Activated T-helper 1 cell treated with anti-CD3 and anti-CD28 coated beads, Interleukin-12 subunit alpha, Interleukin-12 subunit beta, Interleukin-2, Interleukin-4 antibody, amounts not matched to agents 30 ng/mL and 10 ng/mL and 1 ng/mL, durations not matched to agents 14 hours and 24 hours and 36 hours (primary cell): ENCODE measurements at regions of chr3 and their contacts with region 1.

Region 1: GRCh38 chr3:134473868-134474546 is 11.8 kb downstream of the ANAPC13 start:
- DNase-seq: peak; percentile 63
- H3K4me3 Mint-ChIP-seq: no peak overlapping the region
- H3K27ac Mint-ChIP-seq: no peak overlapping the region
- H3K4me1 Mint-ChIP-seq: no peaks in the 10 kb centered on the region
- H3K27me3 Mint-ChIP-seq: peaks cover 1% of the 10 kb centered on the region

Region 2: DNA sequence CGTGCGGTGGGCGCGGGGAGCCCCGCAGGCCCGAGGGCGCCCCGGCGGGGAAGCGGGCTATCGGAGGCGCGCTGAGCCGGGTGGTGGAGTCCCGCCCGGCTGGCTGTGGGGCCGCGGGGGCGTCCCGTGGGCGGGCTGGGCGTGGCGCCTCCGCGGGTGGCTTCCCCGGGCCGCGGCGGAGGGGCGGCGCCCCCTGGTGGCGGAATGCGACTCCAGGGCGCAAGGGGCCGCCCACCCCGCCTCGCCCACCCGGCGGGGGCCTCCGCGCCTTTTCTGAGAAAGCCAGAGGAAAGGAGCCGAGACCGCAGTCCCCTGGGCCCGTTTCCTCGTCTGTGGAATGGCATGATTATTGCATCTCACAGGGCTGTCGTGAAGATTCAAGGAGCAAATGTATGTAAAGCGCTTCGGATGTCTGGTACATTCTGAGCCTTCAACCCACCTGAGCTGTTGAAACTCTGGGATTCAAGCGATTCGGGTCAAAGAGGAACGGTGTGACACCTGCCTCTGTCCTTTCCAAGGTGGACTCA is 546.4 kb before region 1 on chr3:
- intact Hi-C with region 1: loop called (anchors 10 kb)
- DNase-seq: peak; percentile 61
- H3K4me3 Mint-ChIP-seq: peak overlapping the region; percentile 46
- H3K27ac Mint-ChIP-seq: no peak overlapping the region
- H3K4me1 Mint-ChIP-seq: peaks cover 5% of the 10 kb centered on the region
- H3K27me3 Mint-ChIP-seq: peaks cover 30% of the 10 kb centered on the region

Region 3: GRCh38 chr3:134134240-134134639 is 339.8 kb before region 1 on chr3:
- intact Hi-C with region 1: no loop called
- DNase-seq: no peak
- H3K4me3 Mint-ChIP-seq: no peak overlapping the region
- H3K27ac Mint-ChIP-seq: no peak overlapping the region
- H3K4me1 Mint-ChIP-seq: no peaks in the 10 kb centered on the region
- H3K27me3 Mint-ChIP-seq: peaks cover 2% of the 10 kb centered on the region

Region 4: GRCh38 chr3:134197681-134198261 is 276.2 kb before region 1 on chr3:
- intact Hi-C with region 1: loop called (anchors 1 kb)
- DNase-seq: no peak
- H3K4me3 Mint-ChIP-seq: no peak overlapping the region
- H3K27ac Mint-ChIP-seq: no peak overlapping the region
- H3K4me1 Mint-ChIP-seq: peaks cover 6% of the 10 kb centered on the region
- H3K27me3 Mint-ChIP-seq: no peaks in the 10 kb centered on the region

Region 5: DNA sequence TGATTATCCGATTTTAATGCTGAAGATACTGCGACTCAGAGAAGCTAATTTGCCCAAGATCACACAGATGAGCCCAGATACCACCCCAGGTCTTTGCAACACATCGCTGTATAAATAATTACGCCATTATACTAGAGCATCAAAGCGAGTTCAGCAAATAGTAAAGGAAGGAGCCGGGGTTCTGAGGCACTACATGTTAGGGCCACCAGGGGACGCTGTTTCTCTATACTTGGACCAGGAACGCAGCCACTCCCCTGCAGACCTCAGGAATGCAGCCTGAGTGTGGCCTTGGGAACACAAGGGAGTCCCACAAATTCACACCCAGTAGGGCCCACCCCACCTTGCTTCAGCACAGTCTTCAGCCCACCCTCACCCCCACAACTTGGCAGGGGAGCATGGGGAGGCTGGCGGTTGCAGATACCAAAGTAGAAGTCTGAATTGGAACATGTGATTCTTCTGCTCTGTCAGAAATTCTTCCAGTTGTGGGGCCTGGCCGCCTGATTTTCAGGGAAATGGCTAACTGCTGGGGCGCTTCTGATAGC is 165.6 kb before region 1 on chr3:
- intact Hi-C with region 1: loop called (anchors 1 kb)
- DNase-seq: peak; percentile 43
- H3K4me3 Mint-ChIP-seq: no peak overlapping the region
- H3K27ac Mint-ChIP-seq: no peak overlapping the region
- H3K4me1 Mint-ChIP-seq: peaks cover 5% of the 10 kb centered on the region
- H3K27me3 Mint-ChIP-seq: peaks cover 62% of the 10 kb centered on the region

Region 6: DNA sequence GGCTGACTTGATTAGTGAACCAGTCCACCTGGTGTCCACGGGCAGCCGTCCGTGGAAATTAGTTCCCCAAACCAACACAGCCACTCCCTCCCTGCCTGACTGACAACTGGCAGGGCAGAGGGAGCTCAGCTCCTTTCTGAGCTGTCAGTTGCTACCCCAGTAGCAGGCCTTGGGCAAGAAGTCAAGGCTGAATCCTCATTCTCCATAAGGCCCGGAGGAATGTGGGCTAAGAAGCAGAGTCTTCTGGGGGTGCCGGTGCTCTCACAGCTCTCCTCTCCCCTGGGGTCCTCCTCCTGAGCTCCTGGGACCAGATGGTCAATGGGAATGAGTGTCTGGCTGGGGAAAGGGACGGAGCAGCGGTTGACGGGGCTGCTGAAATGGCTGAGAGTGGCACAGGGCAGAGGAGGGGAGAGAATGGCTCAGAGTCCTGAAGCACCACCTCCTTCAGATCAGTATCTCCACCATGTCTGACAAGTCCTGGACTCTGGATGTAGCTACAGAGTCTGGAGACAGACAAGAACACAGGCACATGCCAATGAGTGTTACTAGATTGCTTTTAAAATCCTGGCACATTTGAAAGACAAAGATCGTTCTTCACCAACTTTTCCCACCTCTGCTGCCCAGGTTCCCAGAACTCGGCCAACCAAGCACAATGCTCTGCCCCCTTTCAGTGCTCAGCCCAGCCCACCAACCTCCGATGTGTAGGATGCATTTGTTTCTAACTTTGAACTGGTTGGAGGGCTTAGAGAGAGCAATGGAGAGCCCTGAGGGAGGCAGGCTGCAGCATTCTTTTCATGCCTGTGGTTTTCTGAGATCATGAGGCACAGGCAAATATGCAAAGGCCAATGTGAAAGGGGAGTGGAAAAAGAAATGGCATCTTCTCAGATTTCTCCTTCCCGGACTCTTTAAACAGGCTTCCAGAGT is 116.5 kb before region 1 on chr3:
- intact Hi-C with region 1: loop called (anchors 1 kb)
- DNase-seq: no peak
- H3K4me3 Mint-ChIP-seq: no peak overlapping the region
- H3K27ac Mint-ChIP-seq: no peak overlapping the region
- H3K4me1 Mint-ChIP-seq: no peaks in the 10 kb centered on the region
- H3K27me3 Mint-ChIP-seq: peaks cover 4% of the 10 kb centered on the region

Region 7: GRCh38 chr3:134544316-134544715 is 70.3 kb after region 1 on chr3:
- intact Hi-C with region 1: no loop called
- DNase-seq: no peak
- H3K4me3 Mint-ChIP-seq: no peak overlapping the region
- H3K27ac Mint-ChIP-seq: no peak overlapping the region
- H3K4me1 Mint-ChIP-seq: peaks cover 11% of the 10 kb centered on the region
- H3K27me3 Mint-ChIP-seq: no peaks in the 10 kb centered on the region